Posterior cingulate gyrus (tissue), 11 donors: ENCODE measurements at regions of chr5 and their contacts with region 1.

Region 1: DNA sequence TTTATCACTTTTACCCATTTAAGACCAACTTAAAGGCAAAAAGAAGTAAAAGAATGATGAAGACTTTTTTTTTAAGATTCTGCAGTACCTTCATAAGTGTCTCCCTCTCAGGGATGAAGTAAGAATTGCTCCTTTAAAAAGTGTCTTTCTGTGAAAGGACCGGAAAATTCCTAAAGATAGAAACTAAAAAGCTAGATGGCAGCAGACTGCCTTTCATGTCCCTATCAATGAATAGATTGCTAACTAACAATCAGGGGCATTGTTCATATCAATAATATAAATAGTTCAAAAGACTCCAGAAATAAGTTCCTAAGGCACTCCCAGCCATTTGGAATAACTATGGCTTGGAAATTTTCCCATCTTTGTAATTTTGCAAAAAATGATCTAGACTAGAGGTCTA is 558.0 kb downstream of the PDE4D start:
- DNase-seq: no peak

Region 2: DNA sequence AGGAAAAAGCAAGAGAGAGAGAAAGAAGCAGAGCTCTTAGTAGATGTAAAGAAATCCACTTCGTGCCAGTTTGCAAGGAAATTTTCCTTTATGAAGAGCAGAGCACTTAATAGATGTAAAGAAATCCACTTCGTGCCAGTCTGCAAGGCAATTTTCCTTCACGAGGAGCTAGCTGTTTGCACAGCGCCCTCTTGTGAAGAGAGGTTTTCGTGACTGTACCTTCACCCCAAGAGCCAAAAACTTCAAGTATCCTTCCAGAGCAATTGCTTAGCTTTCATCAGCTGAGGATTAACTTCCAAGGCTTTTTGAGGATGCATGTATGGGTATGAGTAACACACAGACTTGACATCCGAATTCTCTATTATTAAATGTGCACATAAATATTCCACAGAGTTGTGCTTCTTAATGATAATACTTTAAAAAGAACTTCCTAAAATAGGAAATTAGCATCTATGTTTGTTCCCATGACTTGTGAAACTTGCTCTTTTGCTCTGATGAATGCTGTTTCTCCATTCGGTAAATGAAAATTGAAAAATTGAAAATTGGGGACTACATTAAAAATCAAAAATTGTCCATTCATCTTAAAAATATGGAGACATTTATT is 32.3 kb after region 1 on chr5:
- intact Hi-C with region 1: loop called (anchors 2 kb)
- DNase-seq: peak in 8 of 10 donors; percentile 15 to 90 (median 60)